ENCODE measurements at regions of chr15 and their contacts with region 1.

Region 1: GRCh38 chr15:63600616-63601025 is 3.4 kb downstream of the FBXL22 start:
- DNase-seq: peak; percentile 97

Region 2: GRCh38 chr15:63473999-63474809 is 126.4 kb before region 1 on chr15:
- intact Hi-C with region 1: loop called in 1 of 2 experiments (anchors 10 kb)
- DNase-seq: no peak

Region 3: GRCh38 chr15:63504247-63504978 is 96.2 kb before region 1 on chr15 and contains the start of gene USP3:
- intact Hi-C with region 1: loop called in 1 of 2 experiments (anchors 5 kb)
- DNase-seq: peak; percentile 99
- total RNA-seq, gene USP3: 40.3 to 41.8 TPM